Endothelial cell of umbilical vein (primary cell): ENCODE measurements at regions of chr6 and their contacts with region 1.

Region 1: DNA sequence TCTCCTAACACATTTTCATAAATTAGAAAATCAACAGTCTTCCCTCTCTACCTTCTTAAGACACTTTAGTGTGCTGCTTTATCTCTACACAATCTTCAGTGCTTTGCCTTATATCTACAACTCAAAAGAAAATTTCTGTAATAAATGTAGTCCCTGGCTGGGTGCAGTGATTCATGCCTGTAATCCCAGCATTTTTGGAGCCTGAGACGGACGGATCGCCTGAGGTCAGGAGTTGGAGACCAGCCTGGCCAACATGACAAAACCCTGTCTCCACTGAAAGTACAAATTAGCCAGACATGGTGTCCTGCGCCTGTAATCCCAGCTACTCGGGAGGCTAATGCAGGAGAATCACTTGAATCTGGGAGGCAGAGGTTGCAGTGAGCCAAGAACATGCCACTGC is 9.7 kb upstream of the EDN1 start:
- DNase-seq: no peak
- H3K4me3 ChIP-seq: no peak overlapping the region
- H3K27ac ChIP-seq: no peak overlapping the region
- H3K4me1 ChIP-seq: no peaks in the 10 kb centered on the region
- H3K27me3 ChIP-seq: no peaks in the 10 kb centered on the region
- CTCF ChIP-seq: no peak
- POLR2A ChIP-seq: no peak

Region 2: DNA sequence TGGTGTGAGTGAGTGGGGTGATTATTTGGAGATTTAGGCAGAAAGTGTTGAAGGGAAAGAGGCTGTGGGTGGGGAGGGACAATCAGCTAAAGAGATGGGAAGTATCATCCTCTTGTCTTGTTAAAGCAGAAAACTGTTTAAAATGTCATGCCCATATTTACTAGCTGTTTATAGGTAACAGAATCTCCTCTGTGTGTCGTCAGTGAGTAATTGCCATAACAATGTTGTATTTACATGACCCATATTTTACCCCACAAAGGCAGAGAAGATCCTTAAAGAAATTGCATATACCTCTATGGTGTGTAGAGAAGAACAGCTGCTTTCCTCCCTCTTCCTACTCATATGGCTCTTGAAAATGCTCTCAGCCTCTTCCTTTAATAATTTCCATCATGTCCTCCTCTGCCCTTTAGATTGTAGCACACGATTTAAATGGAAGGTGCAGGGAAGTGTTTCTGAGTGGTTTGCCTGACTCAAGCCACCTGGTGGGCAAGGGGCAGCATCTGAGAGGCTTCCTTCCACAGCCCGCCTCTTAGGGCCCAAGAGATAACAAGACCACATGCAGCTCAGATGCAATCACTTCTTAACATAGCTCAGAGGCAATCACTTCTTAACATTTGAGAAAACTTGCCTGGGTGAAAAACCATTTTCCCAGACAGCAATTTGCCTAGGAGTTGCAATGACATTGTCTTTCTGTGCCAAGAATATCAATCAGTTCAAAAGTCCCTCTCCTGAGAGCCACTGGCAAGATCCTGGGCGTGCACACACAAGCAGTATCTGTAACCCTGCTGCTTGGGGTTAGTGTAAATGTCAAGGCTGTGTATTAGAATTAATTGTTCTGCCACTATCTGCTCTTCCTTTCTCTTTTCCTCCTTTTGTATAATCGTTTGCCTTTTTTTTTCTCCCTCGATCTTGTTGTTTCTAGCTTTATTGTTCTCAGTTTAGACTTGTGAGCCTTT is 34.4 kb before region 1 on chr6:
- CTCF ChIA-PET with region 1: no interaction called
- POLR2A ChIA-PET with region 1: no interaction called
- dilution Hi-C with region 1: no loop called
- intact Hi-C with region 1: loop called (anchors 5 kb)
- DNase-seq: peak; percentile 89
- H3K4me3 ChIP-seq: no peak overlapping the region
- H3K27ac ChIP-seq: no peak overlapping the region
- H3K4me1 ChIP-seq: peaks cover 16% of the 10 kb centered on the region
- H3K27me3 ChIP-seq: no peaks in the 10 kb centered on the region
- CTCF ChIP-seq: no peak
- POLR2A ChIP-seq: peak; percentile 24